IMR-90 (cell line): ENCODE measurements at regions of chr1 and their contacts with region 1.

Region 1: DNA sequence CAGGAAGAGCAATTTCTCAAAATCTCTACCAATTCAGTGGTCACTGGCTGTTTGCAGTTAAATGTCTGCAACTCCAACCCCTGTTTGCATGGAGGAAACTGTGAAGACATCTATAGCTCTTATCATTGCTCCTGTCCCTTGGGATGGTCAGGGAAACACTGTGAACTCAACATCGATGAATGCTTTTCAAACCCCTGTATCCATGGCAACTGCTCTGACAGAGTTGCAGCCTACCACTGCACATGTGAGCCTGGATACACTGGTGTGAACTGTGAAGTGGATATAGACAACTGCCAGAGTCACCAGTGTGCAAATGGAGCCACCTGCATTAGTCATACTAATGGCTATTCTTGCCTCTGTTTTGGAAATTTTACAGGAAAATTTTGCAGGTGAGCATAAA is 167.2 kb downstream of the CRB1 start:
- DNase-seq: no peak
- ATAC-seq: no peak
- H3K4me3 ChIP-seq: no peak overlapping the region
- H3K27ac ChIP-seq: no peak overlapping the region
- H3K4me1 ChIP-seq: no peaks in the 10 kb centered on the region
- H3K27me3 ChIP-seq: no peaks in the 10 kb centered on the region
- CTCF ChIP-seq: no peak
- POLR2A ChIP-seq: no peak
- RAD21 ChIP-seq: no peak

Region 2: GRCh38 chr1:197374428-197374827 is 60.8 kb before region 1 on chr1:
- CTCF ChIA-PET with region 1: interaction called, 10 read pairs
- POLR2A ChIA-PET with region 1: no interaction called
- dilution Hi-C with region 1: no loop called
- in situ Hi-C with region 1: no loop called
- intact Hi-C with region 1: no loop called
- DNase-seq: no peak
- ATAC-seq: no peak
- H3K4me3 ChIP-seq: no peak overlapping the region
- H3K27ac ChIP-seq: no peak overlapping the region
- H3K4me1 ChIP-seq: no peaks in the 10 kb centered on the region
- H3K27me3 ChIP-seq: no peaks in the 10 kb centered on the region; the same call in 1 of the 2 replicates
- CTCF ChIP-seq: no peak
- POLR2A ChIP-seq: no peak
- RAD21 ChIP-seq: no peak

Region 3: DNA sequence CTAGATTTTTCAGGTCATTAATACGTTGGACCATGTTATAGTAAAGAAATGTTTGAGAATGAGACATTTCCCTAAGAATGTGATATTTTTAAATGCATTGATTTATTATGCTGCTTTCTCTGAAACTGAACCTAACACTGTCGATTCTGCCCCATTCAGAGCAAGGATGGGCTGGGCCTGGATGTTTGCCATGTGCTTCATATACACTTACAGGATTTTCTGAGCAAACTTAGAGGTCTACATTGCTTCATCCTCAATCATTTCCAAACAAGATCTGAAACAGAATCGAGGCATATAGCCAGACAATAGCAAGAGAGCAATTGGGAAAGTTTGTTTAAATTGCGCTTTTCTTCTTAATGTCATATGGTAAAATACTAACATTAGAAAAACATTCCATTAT is 16.2 kb after region 1 on chr1:
- CTCF ChIA-PET with region 1: no interaction called
- POLR2A ChIA-PET with region 1: no interaction called
- dilution Hi-C with region 1: no loop called
- in situ Hi-C with region 1: no loop called
- intact Hi-C with region 1: no loop called
- DNase-seq: peak; percentile 70
- ATAC-seq: peak; percentile 51
- H3K4me3 ChIP-seq: no peak overlapping the region
- H3K27ac ChIP-seq: no peak overlapping the region
- H3K4me1 ChIP-seq: no peaks in the 10 kb centered on the region
- H3K27me3 ChIP-seq: no peaks in the 10 kb centered on the region
- CTCF ChIP-seq: no peak
- POLR2A ChIP-seq: no peak
- RAD21 ChIP-seq: no peak

Region 4: DNA sequence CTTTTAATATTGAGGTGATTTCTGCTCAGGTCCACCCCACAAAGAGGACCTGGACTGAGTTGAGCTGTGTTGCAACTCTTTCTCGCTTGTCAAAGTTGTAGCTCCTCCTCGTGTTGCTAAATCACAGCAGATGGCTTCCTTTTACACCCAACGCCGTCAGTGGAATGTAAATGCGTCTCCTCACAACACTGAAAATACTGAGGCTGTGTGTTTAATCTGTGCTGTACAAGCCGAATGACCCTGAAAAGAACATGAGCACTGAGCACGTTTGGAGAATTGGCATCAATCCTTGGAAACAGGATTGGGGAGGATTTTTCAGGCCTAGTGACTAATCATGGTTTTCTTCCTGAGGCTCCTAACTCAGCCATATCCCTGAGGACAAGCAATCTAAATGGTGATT is 28.8 kb after region 1 on chr1:
- CTCF ChIA-PET with region 1: no interaction called
- POLR2A ChIA-PET with region 1: no interaction called
- dilution Hi-C with region 1: no loop called
- in situ Hi-C with region 1: no loop called
- intact Hi-C with region 1: no loop called
- DNase-seq: peak; percentile 79
- ATAC-seq: peak; percentile 93
- H3K4me3 ChIP-seq: no peak overlapping the region
- H3K27ac ChIP-seq: no peak overlapping the region
- H3K4me1 ChIP-seq: no peaks in the 10 kb centered on the region
- H3K27me3 ChIP-seq: peaks cover 1% of the 10 kb centered on the region; the same call in 1 of the 2 replicates
- CTCF ChIP-seq: no peak
- POLR2A ChIP-seq: no peak
- RAD21 ChIP-seq: no peak